Activated CD4-positive, alpha-beta memory T cell treated with anti-CD3 and anti-CD28 coated beads, Interleukin-2, amount 10 ng/mL, durations not matched to agents 7 days and 5 days (primary cell): ENCODE measurements at regions of chr2 and their contacts with region 1.

Region 1: GRCh38 chr2:231104115-231104713 is 20.6 kb downstream of the HTR2B start:
- DNase-seq: peak; percentile 65
- H3K4me3 Mint-ChIP-seq: no peak overlapping the region
- H3K27ac Mint-ChIP-seq: no peak overlapping the region
- H3K4me1 Mint-ChIP-seq: peaks cover 2% of the 10 kb centered on the region
- H3K27me3 Mint-ChIP-seq: no peaks in the 10 kb centered on the region

Region 2: GRCh38 chr2:231124838-231125568 is 20.8 kb after region 1 on chr2 and contains the start of gene HTR2B:
- CTCF ChIA-PET with region 1: interaction called, 11 read pairs
- POLR2A ChIA-PET with region 1: interaction called, 3 read pairs
- DNase-seq: no peak
- H3K4me3 Mint-ChIP-seq: peak within 1 kb of the TSS; percentile 59
- H3K27ac Mint-ChIP-seq: peak within 1 kb of the TSS; percentile 74
- H3K4me1 Mint-ChIP-seq: peaks cover 26% of the 10 kb centered on the region
- H3K27me3 Mint-ChIP-seq: no peaks in the 10 kb centered on the region
- total RNA-seq, gene HTR2B: 0.10 to 0.13 TPM

Region 3: DNA sequence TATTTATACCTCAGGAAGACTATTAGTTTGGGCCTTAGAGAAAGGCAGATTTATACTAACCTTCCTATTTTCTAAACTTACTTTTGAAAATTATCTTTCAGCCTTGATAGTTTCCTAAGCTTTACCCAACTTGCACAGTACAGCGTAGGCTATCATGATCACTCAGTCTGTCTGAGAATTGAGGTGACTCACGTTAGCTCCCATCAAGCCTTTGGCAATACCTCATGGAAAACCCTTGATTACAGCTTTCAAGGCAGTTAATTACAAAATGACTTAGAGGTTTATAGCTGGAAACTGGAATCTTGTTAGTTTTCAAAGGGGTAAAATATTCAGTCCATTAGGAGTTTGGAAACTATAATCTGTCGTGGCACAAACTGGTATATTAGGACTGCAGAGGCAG is 67.8 kb after region 1 on chr2:
- CTCF ChIA-PET with region 1: no interaction called
- POLR2A ChIA-PET with region 1: no interaction called
- DNase-seq: no peak
- H3K4me3 Mint-ChIP-seq: no peak overlapping the region
- H3K27ac Mint-ChIP-seq: no peak overlapping the region
- H3K4me1 Mint-ChIP-seq: peaks cover 8% of the 10 kb centered on the region
- H3K27me3 Mint-ChIP-seq: no peaks in the 10 kb centered on the region

Region 4: DNA sequence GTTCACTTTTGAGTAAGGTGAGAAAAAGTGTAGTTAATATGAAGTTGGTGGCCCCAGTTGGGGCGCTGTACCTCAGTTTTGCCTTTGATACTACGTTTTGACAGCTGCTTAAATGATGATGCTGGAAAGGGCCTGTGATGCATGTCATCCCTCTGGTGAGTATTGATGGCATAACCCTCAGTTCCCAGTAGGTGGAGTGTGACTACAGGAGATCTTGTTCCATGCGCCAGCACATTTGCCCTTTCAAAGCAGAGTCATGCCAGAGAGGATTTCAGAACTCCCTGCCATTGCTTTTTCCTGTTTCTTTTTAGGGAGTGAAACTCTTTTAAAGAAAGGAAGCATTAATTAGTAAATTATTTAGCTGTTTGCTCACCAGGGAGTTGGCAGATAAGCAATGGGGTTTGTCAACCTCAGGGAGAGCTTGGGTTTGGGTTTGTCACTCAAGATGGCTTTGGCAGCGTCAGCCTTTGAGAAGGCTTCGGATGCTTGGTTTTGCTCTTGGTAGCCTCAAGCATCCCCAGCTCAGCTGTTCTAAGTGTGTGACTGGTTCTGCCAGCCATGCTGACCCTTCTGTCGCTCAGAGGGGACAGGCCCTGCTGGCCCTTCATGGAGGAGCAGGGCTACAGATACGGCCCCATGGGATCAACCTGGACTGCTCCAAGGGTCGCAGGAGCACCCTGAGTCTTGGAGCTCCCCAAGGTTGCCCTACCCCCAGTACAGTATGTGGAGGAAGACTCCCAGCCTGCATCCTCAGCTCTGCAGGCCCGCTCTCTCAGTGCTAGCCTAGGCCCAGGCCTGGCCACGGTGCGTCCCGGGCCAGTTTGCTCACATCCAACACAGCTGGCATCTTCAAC is 123.3 kb after region 1 on chr2:
- CTCF ChIA-PET with region 1: interaction called, 15 read pairs
- POLR2A ChIA-PET with region 1: no interaction called
- DNase-seq: peak; percentile 54
- H3K4me3 Mint-ChIP-seq: no peak overlapping the region
- H3K27ac Mint-ChIP-seq: no peak overlapping the region
- H3K4me1 Mint-ChIP-seq: no peaks in the 10 kb centered on the region
- H3K27me3 Mint-ChIP-seq: no peaks in the 10 kb centered on the region

Region 5: DNA sequence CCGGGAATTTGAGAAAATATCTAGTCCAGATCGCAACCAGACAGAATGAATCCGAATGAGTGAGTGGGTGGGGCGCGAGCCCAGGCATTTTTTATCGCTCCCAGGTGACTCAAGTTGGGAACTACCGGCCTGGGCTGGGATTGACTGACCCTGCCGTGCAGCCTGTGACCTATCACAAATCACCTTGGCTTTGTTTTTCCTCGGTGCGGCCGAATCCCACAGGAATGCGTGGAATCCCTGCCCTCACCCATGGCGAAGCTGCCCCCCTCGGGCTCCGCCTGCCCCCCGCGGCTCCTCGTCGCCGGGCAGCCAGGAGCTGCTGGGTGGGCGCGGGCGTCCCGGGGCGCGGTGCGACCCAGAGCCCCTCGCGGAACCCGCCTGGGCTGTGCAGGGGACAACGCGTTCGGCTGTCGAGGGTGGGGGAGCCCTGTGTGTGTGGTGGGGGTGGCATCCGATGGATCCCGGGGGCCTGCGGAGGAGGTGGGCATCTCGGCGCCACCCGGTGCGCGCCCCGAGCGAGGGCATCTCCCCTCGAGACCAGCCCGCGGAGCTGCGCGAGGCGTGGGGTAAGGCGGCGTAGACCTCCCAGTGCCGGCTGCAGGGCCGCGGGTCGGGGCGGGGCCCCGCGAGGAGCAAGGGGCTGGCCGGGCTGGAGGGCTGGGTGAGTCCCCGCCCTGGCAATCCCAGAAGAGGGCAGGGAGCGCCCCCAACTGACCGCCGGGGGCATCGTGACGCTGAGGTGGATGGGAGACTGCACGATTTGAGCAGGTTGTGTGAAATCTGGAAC is 307.8 kb after region 1 on chr2:
- CTCF ChIA-PET with region 1: interaction called, 10 read pairs
- POLR2A ChIA-PET with region 1: no interaction called
- DNase-seq: peak; percentile 62
- H3K4me3 Mint-ChIP-seq: no peak overlapping the region
- H3K27ac Mint-ChIP-seq: no peak overlapping the region
- H3K4me1 Mint-ChIP-seq: peaks cover under 1% of the 10 kb centered on the region
- H3K27me3 Mint-ChIP-seq: peaks cover 49% of the 10 kb centered on the region

Region 6: DNA sequence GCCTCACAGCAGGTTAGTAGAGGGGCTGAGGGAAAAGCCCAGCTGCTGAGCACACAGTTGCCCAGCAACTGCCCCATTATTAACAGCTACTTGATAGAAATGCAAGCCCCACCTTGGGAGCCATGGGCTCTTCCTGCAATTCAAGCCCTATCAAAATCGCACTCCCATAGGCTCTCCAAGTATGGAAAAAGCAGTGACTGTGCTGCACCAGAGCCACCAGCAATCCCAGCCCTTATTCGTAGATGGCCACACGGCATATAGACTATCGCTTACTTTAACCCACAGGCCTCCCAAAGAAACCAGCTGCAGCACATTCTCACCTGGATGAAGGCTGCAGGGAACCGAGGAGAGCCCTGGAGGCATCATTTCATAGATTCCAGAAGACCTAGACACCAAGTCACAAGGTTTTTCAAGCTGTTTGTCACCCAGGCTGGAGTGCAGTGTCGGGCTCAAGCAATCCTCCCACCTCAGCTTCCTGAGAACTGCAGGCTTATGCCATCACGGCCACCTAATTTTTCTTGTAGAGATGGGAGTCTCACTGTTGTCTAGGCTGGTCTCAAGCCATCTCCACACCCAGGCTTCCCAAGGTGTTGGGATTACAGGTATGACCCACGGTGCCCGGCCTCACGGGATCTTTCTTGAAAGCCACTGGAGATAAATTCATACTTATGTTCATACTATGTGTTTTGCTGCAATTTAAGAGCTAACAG is 348.7 kb after region 1 on chr2:
- CTCF ChIA-PET with region 1: interaction called, 30 read pairs
- POLR2A ChIA-PET with region 1: interaction called, 7 read pairs
- DNase-seq: no peak
- H3K4me3 Mint-ChIP-seq: no peak overlapping the region
- H3K27ac Mint-ChIP-seq: no peak overlapping the region
- H3K4me1 Mint-ChIP-seq: peaks cover 19% of the 10 kb centered on the region
- H3K27me3 Mint-ChIP-seq: no peaks in the 10 kb centered on the region